Naive thymus-derived CD4-positive, alpha-beta T cell (primary cell): ENCODE measurements at regions of chr2 and their contacts with region 1.

Region 1: GRCh38 chr2:171086352-171087290 is 74.1 kb downstream of the TLK1 start:
- DNase-seq: peak in 8 of 9 donors; percentile 34 to 76 (median 71)
- ATAC-seq: peak; percentile 82
- H3K4me3 ChIP-seq: peak overlapping the region; percentile 34
- H3K4me3 Mint-ChIP-seq: peak overlapping the region; percentile 69 to 92 (median 82)
- H3K27ac ChIP-seq: peak overlapping the region; percentile 71
- H3K27ac Mint-ChIP-seq: peak overlapping the region; percentile 86 to 99 (median 95)
- H3K4me1 ChIP-seq: peaks cover 7 to 68% of the 10 kb centered on the region in 2 donors
- H3K4me1 Mint-ChIP-seq: peaks cover 45 to 86% (median 76%) of the 10 kb centered on the region in 7 donors
- H3K27me3 ChIP-seq: no peaks in the 10 kb centered on the region
- H3K27me3 Mint-ChIP-seq: no peaks in the 10 kb centered on the region

Region 2: GRCh38 chr2:170991399-170992182 is 95.0 kb before region 1 on chr2:
- CTCF ChIA-PET with region 1: no interaction called
- POLR2A ChIA-PET with region 1: interaction called, 4 read pairs
- intact Hi-C with region 1: loop called in 1 of 2 experiments (anchors 5 kb)
- DNase-seq: no peak
- ATAC-seq: no peak
- H3K4me3 ChIP-seq: no peak overlapping the region
- H3K4me3 Mint-ChIP-seq: no peak overlapping the region
- H3K27ac ChIP-seq: no peak overlapping the region
- H3K27ac Mint-ChIP-seq: peak overlapping the region in 6 of 9 donors; percentile 15 to 63 (median 36)
- H3K4me1 ChIP-seq: no peaks in the 10 kb centered on the region
- H3K4me1 Mint-ChIP-seq: peaks cover 0 to 19% (median 10%) of the 10 kb centered on the region in 7 donors
- H3K27me3 ChIP-seq: no peaks in the 10 kb centered on the region
- H3K27me3 Mint-ChIP-seq: no peaks in the 10 kb centered on the region

Region 3: GRCh38 chr2:171018522-171018921 is 68.1 kb before region 1 on chr2:
- CTCF ChIA-PET with region 1: interaction called, 11 read pairs
- POLR2A ChIA-PET with region 1: interaction called, 3 read pairs
- intact Hi-C with region 1: loop called (anchors 2 to 10 kb)
- DNase-seq: no peak
- ATAC-seq: no peak
- H3K4me3 ChIP-seq: no peak overlapping the region
- H3K4me3 Mint-ChIP-seq: no peak overlapping the region
- H3K27ac ChIP-seq: no peak overlapping the region
- H3K27ac Mint-ChIP-seq: peak overlapping the region in 4 of 9 donors; percentile 13 to 81 (median 38)
- H3K4me1 ChIP-seq: peaks cover 0 to 8% of the 10 kb centered on the region in 2 donors
- H3K4me1 Mint-ChIP-seq: peaks cover 11 to 64% (median 49%) of the 10 kb centered on the region in 7 donors
- H3K27me3 ChIP-seq: no peaks in the 10 kb centered on the region
- H3K27me3 Mint-ChIP-seq: no peaks in the 10 kb centered on the region

Region 4: GRCh38 chr2:171056307-171056706 is 30.3 kb before region 1 on chr2:
- CTCF ChIA-PET with region 1: interaction called, 4 read pairs
- POLR2A ChIA-PET with region 1: interaction called, 5 read pairs
- intact Hi-C with region 1: loop called in 1 of 2 experiments (anchors 2 kb)
- DNase-seq: no peak
- ATAC-seq: no peak
- H3K4me3 ChIP-seq: no peak overlapping the region
- H3K4me3 Mint-ChIP-seq: no peak overlapping the region
- H3K27ac ChIP-seq: no peak overlapping the region
- H3K27ac Mint-ChIP-seq: peak overlapping the region in 2 of 9 donors; percentile 1 to 24
- H3K4me1 ChIP-seq: no peaks in the 10 kb centered on the region
- H3K4me1 Mint-ChIP-seq: peaks cover 0 to 25% (median 6%) of the 10 kb centered on the region in 7 donors
- H3K27me3 ChIP-seq: no peaks in the 10 kb centered on the region
- H3K27me3 Mint-ChIP-seq: no peaks in the 10 kb centered on the region

Region 5: DNA sequence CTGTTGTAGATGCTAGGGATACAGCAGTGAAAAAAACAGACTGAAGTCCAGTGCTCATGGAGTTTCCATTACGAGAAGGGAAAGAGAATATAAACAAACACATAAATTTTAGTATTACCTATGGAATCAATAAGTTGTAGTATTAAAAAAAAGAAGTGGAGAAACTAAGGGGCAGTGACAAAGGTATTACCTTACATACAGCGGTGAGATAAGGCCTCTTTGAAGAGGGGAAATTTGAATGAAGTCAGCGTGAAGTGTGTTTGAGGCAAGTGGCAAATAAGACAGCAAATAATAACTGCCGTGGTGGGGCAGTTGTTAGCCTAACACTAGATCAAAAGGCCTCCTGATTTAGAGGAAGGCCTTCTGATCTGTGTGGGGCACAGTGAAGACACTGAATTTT is 16.2 kb after region 1 on chr2:
- CTCF ChIA-PET with region 1: interaction called, 6 read pairs
- POLR2A ChIA-PET with region 1: interaction called, 9 read pairs
- intact Hi-C with region 1: loop called in 1 of 2 experiments (anchors 2 kb)
- DNase-seq: peak in 1 of 9 donors; percentile 27
- ATAC-seq: peak; percentile 48
- H3K4me3 ChIP-seq: no peak overlapping the region
- H3K4me3 Mint-ChIP-seq: peak overlapping the region in 7 of 10 donors; percentile 3 to 46 (median 40)
- H3K27ac ChIP-seq: no peak overlapping the region
- H3K27ac Mint-ChIP-seq: peak overlapping the region in 8 of 9 donors; percentile 42 to 84 (median 61)
- H3K4me1 ChIP-seq: peaks cover 0 to 7% of the 10 kb centered on the region in 2 donors
- H3K4me1 Mint-ChIP-seq: peaks cover 14 to 72% (median 56%) of the 10 kb centered on the region in 7 donors
- H3K27me3 ChIP-seq: no peaks in the 10 kb centered on the region
- H3K27me3 Mint-ChIP-seq: no peaks in the 10 kb centered on the region

Region 6: GRCh38 chr2:171160119-171160955 is 73.7 kb after region 1 on chr2 and contains the start of gene TLK1:
- CTCF ChIA-PET with region 1: interaction called, 41 read pairs
- POLR2A ChIA-PET with region 1: interaction called, 32 read pairs
- intact Hi-C with region 1: loop called (anchors 1 kb)
- DNase-seq: peak; percentile 63 to 84 (median 81)
- ATAC-seq: peak; percentile 78
- H3K4me3 ChIP-seq: peak within 1 kb of the TSS; percentile 70
- H3K4me3 Mint-ChIP-seq: peak within 1 kb of the TSS; percentile 87 to 98 (median 96)
- H3K27ac ChIP-seq: peak within 1 kb of the TSS; percentile 99
- H3K27ac Mint-ChIP-seq: peak within 1 kb of the TSS; percentile 88 to 98 (median 97)
- H3K4me1 ChIP-seq: peaks cover 30 to 39% of the 10 kb centered on the region in 2 donors
- H3K4me1 Mint-ChIP-seq: peaks cover 49 to 70% (median 58%) of the 10 kb centered on the region in 7 donors
- H3K27me3 ChIP-seq: no peaks in the 10 kb centered on the region
- H3K27me3 Mint-ChIP-seq: no peaks in the 10 kb centered on the region
- total RNA-seq, gene TLK1: 96.9 to 191 (median 141) TPM